ENCODE measurements at regions of chr1 and their contacts with region 1.

Region 1: DNA sequence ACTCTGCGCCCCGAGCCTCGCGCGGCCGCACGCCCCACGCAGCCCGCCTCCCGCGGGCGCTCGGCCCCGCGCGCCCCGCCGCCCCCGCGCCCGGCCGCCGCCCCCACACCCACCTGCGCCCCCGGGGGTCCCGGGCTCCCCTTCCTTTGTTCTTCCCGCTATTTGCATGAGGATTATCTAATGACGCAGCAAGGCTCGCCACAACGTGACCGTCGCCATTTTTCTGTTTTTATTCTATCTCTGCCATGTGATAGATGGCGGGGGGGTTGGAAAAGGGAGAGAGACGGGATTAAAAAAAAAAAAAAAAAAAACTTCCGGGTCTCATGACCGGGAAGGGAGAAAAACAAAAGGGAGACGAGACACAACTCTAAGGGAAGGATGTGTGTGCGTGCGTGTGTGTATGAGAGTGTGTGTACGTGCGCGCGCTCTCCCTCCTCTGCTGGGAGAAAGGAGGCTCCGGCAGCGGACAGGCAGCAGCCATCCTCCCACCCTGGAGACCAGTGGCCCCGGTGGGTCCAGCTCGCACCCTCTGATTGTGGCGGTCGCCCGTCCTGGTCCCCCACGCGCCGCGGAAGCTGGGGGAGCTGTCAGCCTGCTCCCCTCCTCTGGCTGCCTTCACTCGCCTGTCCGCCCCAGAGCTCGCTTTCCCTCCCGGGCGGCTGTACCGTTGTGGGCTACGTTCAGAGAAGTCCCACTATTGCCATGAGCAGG is 80.4 kb upstream of the AK4 start:
- DNase-seq: peak; percentile 81

Region 2: GRCh38 chr1:64744492-64745180 is 323.0 kb before region 1 on chr1 and contains the start of gene RAVER2:
- intact Hi-C with region 1: loop called (anchors 10 kb)
- DNase-seq: peak; percentile 87
- total RNA-seq, gene RAVER2: 12.2 TPM

Region 3: DNA sequence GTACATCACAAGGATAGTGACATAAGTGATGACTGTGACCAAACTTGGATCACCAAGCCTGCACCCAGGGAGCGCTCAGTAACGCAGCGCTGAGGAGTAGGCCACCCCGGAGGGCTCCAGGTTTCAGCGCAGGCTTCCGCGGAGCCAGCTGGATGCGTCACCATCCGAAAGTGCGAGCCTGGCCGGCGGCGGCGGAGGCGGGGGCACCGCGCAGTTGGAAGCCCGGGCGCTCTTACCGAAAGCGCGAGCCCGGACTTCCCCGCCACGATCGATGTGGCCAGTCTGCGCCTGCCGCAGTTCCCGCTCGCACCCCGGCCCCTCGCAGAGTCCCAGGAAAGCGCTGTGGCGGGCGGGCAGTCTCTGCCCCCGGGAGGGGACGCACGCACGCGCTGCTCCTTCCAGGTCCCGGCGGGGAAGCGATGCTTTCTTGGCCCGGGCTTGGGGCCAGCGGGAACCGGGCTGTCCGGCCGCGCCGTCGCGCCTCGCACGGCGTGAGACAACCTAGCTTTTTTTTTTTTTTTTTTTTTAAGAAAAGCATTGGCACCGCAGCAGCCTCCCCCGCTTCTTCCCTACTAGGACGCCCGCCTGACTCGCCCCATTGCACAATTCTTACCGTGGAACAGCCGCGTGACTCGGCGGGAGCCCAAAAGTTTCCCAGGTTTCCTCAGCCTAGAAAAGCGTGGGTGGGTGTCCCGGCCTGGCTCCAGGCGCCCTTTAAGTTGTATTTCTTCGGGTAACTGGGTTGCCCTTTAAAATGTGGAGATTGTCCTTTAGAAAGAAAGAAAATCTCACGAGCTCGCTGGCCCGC is 64.9 kb before region 1 on chr1:
- intact Hi-C with region 1: loop called (anchors 2 kb)
- DNase-seq: peak; percentile 89

Region 4: GRCh38 chr1:65048335-65048734 is 19.3 kb before region 1 on chr1:
- intact Hi-C with region 1: no loop called
- DNase-seq: no peak

Region 5: DNA sequence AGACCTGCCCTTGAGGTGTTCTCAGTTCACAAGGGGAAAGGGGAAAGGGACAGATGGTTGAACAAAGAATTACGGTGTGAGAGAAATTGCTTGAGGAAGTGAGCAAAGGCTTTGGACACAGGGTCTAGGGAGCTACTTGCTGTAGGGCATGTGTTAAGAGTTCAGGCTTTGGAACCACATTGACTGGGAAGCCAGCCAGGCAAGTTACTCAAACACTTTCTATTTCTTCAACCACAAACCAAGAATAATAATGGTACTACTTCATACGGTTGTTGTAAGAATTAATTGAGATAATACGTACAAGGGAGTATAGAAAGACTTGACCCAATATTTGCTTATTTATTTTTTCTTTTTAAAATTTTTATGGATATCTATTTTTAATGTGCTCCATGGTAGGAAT is 106.9 kb after region 1 on chr1:
- intact Hi-C with region 1: loop called (anchors 10 kb)
- DNase-seq: no peak

Region 6: GRCh38 chr1:65687428-65688214 is 620.0 kb after region 1 on chr1:
- intact Hi-C with region 1: loop called (anchors 10 kb)
- DNase-seq: peak; percentile 91